GM13977 (cell line): ENCODE measurements at regions of chr3 and their contacts with region 1.

Region 1: GRCh38 chr3:73502609-73503583 is 121.8 kb downstream of the PDZRN3 start:
- DNase-seq: peak; percentile 75
- CTCF ChIP-seq: peak; percentile 89

Region 2: GRCh38 chr3:73100741-73101559 is 401.9 kb before region 1 on chr3:
- in situ Hi-C with region 1: loop called (anchors 10 kb)
- DNase-seq: peak; percentile 88
- CTCF ChIP-seq: peak; percentile 87

Region 3: GRCh38 chr3:73459711-73460110 is 43.2 kb before region 1 on chr3:
- in situ Hi-C with region 1: loop called (anchors 5 kb)
- DNase-seq: no peak
- CTCF ChIP-seq: no peak